Activated CD4-positive, alpha-beta T cell treated with anti-CD3 and anti-CD28 coated beads, Interleukin-2, amount 10 ng/mL, durations not matched to agents 7 days and 5 days (primary cell): ENCODE measurements at regions of chr2 and their contacts with region 1.

Region 1: DNA sequence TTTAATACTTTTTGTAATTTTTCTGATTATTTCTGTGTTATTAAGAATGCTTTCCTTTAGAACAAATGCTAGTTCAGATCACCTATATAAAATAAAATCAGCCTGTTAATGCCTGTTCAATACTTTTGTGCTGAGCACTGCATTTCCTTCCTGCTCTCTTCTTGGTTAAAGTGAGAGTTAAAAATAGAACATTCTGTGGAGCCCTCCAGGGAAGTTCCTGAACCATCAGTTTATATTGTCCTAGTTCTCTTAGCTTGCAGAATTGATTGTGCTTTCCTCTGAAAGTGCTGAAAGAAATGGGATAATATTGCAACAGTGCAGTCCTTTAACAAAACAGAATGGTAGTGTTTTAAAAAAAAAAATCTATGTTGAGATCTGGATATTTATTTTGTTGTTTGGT is 74.6 kb upstream of the UBXN4 start:
- DNase-seq: no peak
- H3K4me3 Mint-ChIP-seq: no peak overlapping the region
- H3K27ac Mint-ChIP-seq: no peak overlapping the region
- H3K4me1 Mint-ChIP-seq: peaks cover 26% of the 10 kb centered on the region
- H3K27me3 Mint-ChIP-seq: no peaks in the 10 kb centered on the region

Region 2: GRCh38 chr2:135694711-135695110 is 27.7 kb after region 1 on chr2:
- CTCF ChIA-PET with region 1: no interaction called
- POLR2A ChIA-PET with region 1: interaction called, 11 read pairs
- DNase-seq: no peak
- H3K4me3 Mint-ChIP-seq: no peak overlapping the region
- H3K27ac Mint-ChIP-seq: no peak overlapping the region
- H3K4me1 Mint-ChIP-seq: peaks cover 24% of the 10 kb centered on the region
- H3K27me3 Mint-ChIP-seq: no peaks in the 10 kb centered on the region

Region 3: GRCh38 chr2:135732561-135732960 is 65.5 kb after region 1 on chr2:
- CTCF ChIA-PET with region 1: no interaction called
- POLR2A ChIA-PET with region 1: no interaction called
- DNase-seq: no peak
- H3K4me3 Mint-ChIP-seq: no peak overlapping the region
- H3K27ac Mint-ChIP-seq: no peak overlapping the region
- H3K4me1 Mint-ChIP-seq: peaks cover 8% of the 10 kb centered on the region
- H3K27me3 Mint-ChIP-seq: no peaks in the 10 kb centered on the region